ENCODE measurements at regions of chr1 and their contacts with region 1.

Region 1: GRCh38 chr1:204363335-204364124 is 3.8 kb upstream of the PLEKHA6 start:
- DNase-seq: peak; percentile 76
- H3K4me3 Mint-ChIP-seq: peak overlapping the region; percentile 31
- H3K27ac Mint-ChIP-seq: no peak overlapping the region
- H3K4me1 Mint-ChIP-seq: peaks cover 11% of the 10 kb centered on the region
- H3K27me3 Mint-ChIP-seq: peaks cover 10% of the 10 kb centered on the region

Region 2: DNA sequence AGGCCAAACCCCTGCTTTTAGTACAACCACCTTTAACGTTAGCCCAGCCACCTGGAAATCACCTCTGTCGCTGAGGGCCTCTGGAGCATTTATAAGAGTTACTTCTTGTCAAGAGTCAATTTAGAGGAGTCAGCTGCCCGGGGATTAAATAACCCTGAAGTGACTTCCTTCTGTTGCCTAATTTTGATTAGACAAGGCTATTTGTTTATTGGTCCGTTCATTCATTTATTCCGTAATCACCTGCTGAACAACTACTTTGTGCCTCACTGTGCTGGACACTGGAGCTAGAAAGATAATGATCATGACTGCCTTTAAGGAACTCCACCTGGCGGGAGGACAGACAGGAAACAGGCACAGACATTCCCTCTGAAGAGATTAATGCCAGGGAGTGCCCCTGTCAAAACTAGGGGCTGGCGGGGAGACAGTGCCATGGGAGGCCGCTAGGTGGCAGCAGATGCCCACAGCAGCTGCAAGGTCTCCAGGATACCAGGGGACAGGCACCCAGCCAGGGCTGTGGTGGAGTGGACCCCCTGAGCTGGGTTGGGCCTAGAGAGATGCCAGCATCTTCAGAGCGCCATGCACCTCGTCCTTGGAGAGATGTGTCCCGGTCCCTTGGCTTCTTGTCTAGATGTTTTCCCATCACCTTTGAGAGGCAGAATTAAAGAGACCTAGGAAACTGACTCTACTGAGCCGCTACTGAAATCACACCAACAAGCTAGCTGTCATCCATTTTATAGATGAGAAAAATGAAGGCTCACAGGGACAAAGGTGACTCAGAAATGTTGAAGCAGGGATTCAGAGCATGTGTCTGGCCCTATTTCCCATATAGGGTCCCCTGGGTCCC is 201.1 kb before region 1 on chr1:
- CTCF ChIA-PET with region 1: interaction called, 40 read pairs
- POLR2A ChIA-PET with region 1: no interaction called
- DNase-seq: peak; percentile 79
- H3K4me3 Mint-ChIP-seq: no peak overlapping the region
- H3K27ac Mint-ChIP-seq: no peak overlapping the region
- H3K4me1 Mint-ChIP-seq: no peaks in the 10 kb centered on the region
- H3K27me3 Mint-ChIP-seq: peaks cover 2% of the 10 kb centered on the region

Region 3: DNA sequence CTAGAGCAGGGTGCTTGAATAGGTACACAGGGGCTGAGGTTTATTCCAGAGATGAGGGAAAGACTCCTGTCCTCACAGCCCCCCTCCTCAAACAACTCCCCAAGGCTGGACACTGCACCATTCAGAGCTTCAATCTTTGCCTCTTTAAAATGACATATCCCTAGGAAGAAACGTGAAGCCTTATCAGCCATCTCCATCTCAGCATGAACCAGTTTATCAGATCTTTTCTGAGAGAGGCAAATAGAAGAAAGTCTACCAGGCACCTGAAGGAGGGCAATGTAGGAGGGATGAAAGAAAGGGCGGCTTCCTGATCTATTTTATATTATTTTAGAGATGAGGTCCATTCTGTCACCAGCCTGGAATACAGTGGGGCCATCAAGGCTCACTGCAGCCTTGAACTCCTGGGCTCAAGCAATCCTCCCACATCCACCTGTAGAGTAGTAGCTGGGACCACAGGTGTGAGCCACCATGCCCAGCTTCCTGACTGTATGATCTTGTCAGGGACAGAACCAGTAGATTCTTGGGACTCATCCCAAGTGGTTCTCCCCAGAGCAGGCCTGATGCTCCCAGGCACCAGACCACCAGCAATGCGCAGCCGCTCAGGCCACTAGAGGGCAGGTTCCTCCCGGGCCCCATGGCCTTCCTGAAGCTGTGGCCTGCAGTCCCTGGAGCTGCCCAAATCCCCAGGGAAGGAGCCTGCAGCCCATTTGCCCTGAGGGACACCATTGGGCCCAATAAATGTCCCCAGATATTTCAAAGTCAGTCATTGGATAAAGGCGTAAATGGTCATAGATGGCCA is 105.4 kb before region 1 on chr1:
- CTCF ChIA-PET with region 1: interaction called, 23 read pairs
- POLR2A ChIA-PET with region 1: no interaction called
- DNase-seq: peak; percentile 31
- H3K4me3 Mint-ChIP-seq: no peak overlapping the region
- H3K27ac Mint-ChIP-seq: no peak overlapping the region
- H3K4me1 Mint-ChIP-seq: no peaks in the 10 kb centered on the region
- H3K27me3 Mint-ChIP-seq: peaks cover 2% of the 10 kb centered on the region

Region 4: GRCh38 chr1:204353213-204353910 is 10.2 kb before region 1 on chr1:
- CTCF ChIA-PET with region 1: interaction called, 12 read pairs
- POLR2A ChIA-PET with region 1: no interaction called
- DNase-seq: no peak
- H3K4me3 Mint-ChIP-seq: no peak overlapping the region
- H3K27ac Mint-ChIP-seq: no peak overlapping the region
- H3K4me1 Mint-ChIP-seq: no peaks in the 10 kb centered on the region
- H3K27me3 Mint-ChIP-seq: peaks cover 2% of the 10 kb centered on the region

Region 5: DNA sequence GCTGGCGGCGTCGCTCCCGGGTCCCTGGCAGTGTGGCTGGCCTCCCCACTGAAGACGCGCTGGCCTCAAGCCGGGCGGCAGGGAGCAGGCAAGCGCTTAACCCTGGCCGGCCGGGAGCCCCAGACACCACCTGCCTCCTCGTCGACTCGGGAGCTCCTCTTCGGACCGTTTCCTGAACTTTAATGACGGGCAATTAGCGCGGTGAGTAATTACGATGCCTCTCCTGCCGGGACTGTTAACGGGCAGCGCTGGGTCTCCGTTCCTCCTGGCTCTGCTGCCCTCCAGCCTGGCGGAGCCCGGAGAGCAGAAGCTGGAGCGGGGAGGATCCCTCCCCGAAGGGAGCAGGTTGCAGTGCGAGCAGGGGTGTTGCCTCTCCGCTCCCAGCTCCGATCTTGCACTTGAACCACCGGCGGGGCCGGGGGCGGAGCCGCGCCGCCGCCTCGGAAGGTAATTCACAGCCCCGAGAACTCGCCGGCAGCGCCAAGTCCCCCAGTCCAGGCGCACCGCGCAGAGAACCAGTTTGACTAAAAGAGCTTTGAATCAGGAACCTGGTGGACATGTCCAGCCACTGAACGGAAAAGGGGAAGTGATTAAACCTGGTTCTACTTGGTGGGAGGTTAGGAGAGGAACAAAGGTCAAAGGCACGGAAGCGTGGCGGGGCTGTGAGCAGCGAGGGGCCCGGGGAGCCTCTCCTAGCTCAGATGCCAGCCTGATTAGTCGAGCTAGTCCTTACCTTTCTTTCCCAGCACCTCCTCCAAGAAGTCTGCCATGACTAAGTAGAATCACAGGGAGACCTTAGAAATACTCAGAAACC is 14.5 kb after region 1 on chr1:
- CTCF ChIA-PET with region 1: interaction called, 19 read pairs
- POLR2A ChIA-PET with region 1: interaction called, 3 read pairs
- DNase-seq: peak; percentile 41
- H3K4me3 Mint-ChIP-seq: peak overlapping the region; percentile 70
- H3K27ac Mint-ChIP-seq: no peak overlapping the region
- H3K4me1 Mint-ChIP-seq: peaks cover 13% of the 10 kb centered on the region
- H3K27me3 Mint-ChIP-seq: peaks cover 43% of the 10 kb centered on the region

Region 6: DNA sequence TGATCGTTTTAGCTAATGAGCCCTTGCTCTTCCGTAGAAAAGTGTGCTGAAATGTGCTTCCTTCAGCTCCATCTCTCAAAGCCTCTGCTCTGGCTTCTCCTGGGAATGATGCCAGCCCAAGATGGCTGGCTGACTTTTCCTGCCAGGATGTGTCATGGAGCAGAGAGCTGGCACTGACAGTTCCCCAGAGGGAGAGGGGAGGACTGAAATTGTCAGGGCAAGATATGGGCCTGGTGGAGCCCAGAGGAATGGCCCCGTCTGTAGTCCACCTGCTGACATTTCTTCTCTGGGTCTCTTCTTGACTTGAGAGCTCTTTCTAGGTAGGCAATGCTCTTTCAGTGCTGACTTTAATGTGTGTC is 21.4 kb after region 1 on chr1:
- CTCF ChIA-PET with region 1: interaction called, 19 read pairs
- POLR2A ChIA-PET with region 1: no interaction called
- DNase-seq: no peak
- H3K4me3 Mint-ChIP-seq: no peak overlapping the region
- H3K27ac Mint-ChIP-seq: no peak overlapping the region
- H3K4me1 Mint-ChIP-seq: peaks cover 3% of the 10 kb centered on the region
- H3K27me3 Mint-ChIP-seq: peaks cover 11% of the 10 kb centered on the region